ENCODE measurements at regions of chr6 and their contacts with region 1.

Region 1: GRCh38 chr6:121615493-121615892 is 180.0 kb downstream of the GJA1 start:
- DNase-seq: no peak
- ATAC-seq: no peak
- H3K4me3 ChIP-seq: no peak overlapping the region
- H3K27ac ChIP-seq: no peak overlapping the region
- H3K4me1 ChIP-seq: peaks cover 0 to 2% of the 10 kb centered on the region in 2 donors
- H3K27me3 ChIP-seq: no peaks in the 10 kb centered on the region

Region 2: GRCh38 chr6:121573481-121573880 is 42.0 kb before region 1 on chr6:
- intact Hi-C with region 1: no loop called
- DNase-seq: no peak
- ATAC-seq: peak; percentile 68
- H3K4me3 ChIP-seq: no peak overlapping the region
- H3K27ac ChIP-seq: peak overlapping the region in 1 of 2 donors; percentile 43
- H3K4me1 ChIP-seq: no peaks in the 10 kb centered on the region
- H3K27me3 ChIP-seq: no peaks in the 10 kb centered on the region

Region 3: GRCh38 chr6:121657972-121658371 is 42.5 kb after region 1 on chr6:
- intact Hi-C with region 1: loop called in 1 of 2 experiments (anchors 5 kb)
- DNase-seq: no peak
- ATAC-seq: no peak
- H3K4me3 ChIP-seq: no peak overlapping the region
- H3K27ac ChIP-seq: no peak overlapping the region
- H3K4me1 ChIP-seq: no peaks in the 10 kb centered on the region
- H3K27me3 ChIP-seq: no peaks in the 10 kb centered on the region

Region 4: GRCh38 chr6:122165014-122165413 is 549.5 kb after region 1 on chr6:
- intact Hi-C with region 1: no loop called
- DNase-seq: no peak
- ATAC-seq: no peak
- H3K4me3 ChIP-seq: no peak overlapping the region
- H3K27ac ChIP-seq: no peak overlapping the region
- H3K4me1 ChIP-seq: no peaks in the 10 kb centered on the region
- H3K27me3 ChIP-seq: no peaks in the 10 kb centered on the region

Region 5: GRCh38 chr6:122405417-122405816 is 789.9 kb after region 1 on chr6:
- intact Hi-C with region 1: no loop called
- DNase-seq: no peak
- ATAC-seq: no peak
- H3K4me3 ChIP-seq: no peak overlapping the region
- H3K27ac ChIP-seq: no peak overlapping the region
- H3K4me1 ChIP-seq: peaks cover 0 to 4% of the 10 kb centered on the region in 2 donors
- H3K27me3 ChIP-seq: no peaks in the 10 kb centered on the region

Measured in aorta (tissue), 5 donors.